PC-9 (cell line): ENCODE measurements at regions of chr20 and their contacts with region 1.

Region 1: GRCh38 chr20:22052025-22052650 is 346.7 kb downstream of the PAX1 start:
- DNase-seq: no peak
- H3K4me3 ChIP-seq: no peak overlapping the region
- H3K27ac ChIP-seq: no peak overlapping the region
- H3K4me1 ChIP-seq: no peaks in the 10 kb centered on the region
- H3K27me3 ChIP-seq: no peaks in the 10 kb centered on the region
- CTCF ChIP-seq: no peak

Region 2: DNA sequence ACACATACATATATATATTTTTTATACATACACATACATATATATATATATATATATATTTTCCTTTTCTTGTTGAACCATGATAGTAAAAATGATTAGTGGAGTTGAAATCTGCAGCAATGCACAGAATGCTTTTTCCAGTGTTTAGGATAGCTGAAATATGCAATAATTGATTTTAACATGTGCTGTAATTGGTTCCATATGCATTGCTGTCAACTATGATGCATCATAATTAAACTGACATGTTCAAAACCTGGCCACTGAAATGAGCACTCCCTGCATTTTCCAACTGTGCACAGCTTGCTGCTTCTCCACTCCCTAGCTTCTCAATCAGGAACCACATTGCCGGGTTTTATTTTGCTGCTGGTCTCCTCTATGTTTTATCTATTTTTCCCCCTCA is 11.6 kb after region 1 on chr20:
- CTCF ChIA-PET with region 1: no interaction called
- POLR2A ChIA-PET with region 1: interaction called, 16 read pairs
- intact Hi-C with region 1: no loop called
- DNase-seq: no peak
- H3K4me3 ChIP-seq: no peak overlapping the region
- H3K27ac ChIP-seq: no peak overlapping the region
- H3K4me1 ChIP-seq: no peaks in the 10 kb centered on the region
- H3K27me3 ChIP-seq: peaks cover 10% of the 10 kb centered on the region; the same call in 1 of the 2 replicates
- CTCF ChIP-seq: no peak